AG04449 (cell line): ENCODE measurements at regions of chr3 and their contacts with region 1.

Region 1: DNA sequence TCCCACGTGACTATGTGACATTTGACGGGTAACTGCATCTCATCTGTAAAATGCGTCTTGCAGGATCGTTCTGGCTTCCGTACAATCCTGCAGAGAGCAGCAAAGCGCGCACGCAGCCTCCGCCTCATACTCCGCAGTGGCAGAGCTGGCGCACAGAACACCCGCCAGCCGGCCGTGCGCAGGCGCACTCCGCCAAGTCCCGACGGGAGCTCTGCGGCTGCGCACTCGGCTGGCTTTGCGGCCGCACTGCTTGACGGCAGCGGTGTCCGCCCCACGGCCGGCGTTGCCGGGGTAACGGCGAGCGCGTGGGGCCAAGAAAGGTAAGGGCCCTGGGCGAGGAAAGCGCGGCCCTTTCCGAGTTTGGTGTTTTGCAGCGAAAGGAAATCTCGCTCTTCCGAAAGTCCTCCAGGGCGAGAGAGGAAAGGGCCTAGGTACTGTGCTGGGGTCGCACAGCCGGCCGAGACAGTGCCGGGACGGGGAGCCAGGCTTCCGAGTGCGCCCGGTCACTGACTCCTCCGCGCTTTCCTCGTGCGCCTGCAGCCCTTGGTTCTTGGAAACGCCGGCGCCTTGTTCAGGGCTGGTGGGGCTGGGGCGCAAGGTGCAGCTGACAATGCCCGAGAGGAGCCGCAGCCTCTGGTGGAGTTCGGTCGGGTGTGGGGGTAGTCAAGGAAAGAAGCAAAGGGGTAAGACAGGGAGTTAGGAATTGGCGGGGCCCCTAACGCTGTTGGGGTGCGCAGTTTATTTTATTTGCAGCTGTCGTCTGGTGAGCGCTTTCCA is at the start of gene TSEN2:
- DNase-seq: no peak
- H3K4me3 ChIP-seq: peak within 1 kb of the TSS; percentile 90
- CTCF ChIP-seq: peak; percentile 39

Region 2: GRCh38 chr3:12135029-12135657 is 349.2 kb before region 1 on chr3:
- CTCF ChIA-PET with region 1: interaction called, 808 read pairs
- POLR2A ChIA-PET with region 1: interaction called, 3 read pairs
- DNase-seq: no peak
- H3K4me3 ChIP-seq: no peak overlapping the region
- CTCF ChIP-seq: peak; percentile 95

Region 3: DNA sequence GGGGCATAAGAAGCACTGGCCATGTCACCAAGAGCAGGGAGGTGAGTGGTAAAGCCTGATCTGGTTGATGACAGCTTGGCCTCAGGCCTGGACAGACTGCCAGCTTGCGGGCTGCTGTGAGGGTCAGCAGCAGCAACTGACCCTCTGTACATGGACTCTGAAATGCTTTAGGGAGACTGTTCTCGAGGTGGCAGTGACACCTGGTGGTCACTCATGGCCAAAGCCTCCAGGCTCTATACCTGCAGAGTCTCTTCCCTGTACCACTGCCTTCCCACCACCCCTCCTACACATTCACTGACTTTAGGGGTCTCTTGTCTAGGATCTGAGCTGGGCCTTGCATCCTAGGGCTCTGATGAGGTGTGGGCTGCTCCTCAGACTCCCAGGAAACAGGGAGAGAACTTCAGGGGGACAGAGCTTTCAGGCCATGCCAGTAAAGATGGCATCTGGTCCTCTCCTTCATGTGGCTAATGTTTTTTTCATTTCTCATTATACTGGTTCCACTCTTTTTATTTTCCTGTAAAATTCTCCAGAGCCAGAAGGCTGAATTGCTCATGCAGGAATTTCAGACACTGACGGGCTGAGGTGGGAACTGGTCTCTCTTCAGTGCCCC is 308.4 kb before region 1 on chr3:
- CTCF ChIA-PET with region 1: interaction called, 76 read pairs
- POLR2A ChIA-PET with region 1: no interaction called
- DNase-seq: no peak
- H3K4me3 ChIP-seq: no peak overlapping the region
- CTCF ChIP-seq: peak; percentile 84

Region 4: DNA sequence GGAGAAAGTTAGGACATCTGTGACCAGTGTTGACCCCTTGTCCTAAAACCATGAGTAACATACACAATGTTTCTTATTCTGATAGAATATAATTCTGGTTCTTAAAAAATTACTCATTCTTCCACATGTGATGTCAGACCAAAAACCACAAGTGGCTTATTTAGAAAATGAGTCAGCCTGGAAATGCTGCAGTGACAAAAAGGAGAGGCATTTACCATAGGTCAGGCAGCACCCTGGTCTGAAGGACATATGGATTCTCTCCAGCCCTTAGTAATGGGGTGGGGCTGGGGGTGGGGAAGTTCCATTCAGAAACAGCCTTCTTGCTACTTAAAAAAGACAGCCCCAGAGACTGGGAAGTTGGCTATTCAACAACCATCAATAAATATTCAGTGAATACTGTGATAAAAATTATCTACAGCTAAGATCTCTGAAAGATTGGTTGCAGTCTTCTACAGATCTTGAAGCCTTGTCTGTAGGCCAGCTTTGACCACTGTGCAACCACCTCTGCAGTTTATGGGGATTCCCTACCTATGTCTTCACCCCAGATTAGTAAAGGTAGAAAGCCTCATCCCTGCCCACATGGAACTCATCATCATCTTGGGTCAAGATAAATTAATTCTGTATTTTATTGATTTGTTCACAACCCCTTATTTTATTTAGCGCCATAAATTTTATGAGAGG is 290.8 kb before region 1 on chr3:
- CTCF ChIA-PET with region 1: interaction called, 14 read pairs
- POLR2A ChIA-PET with region 1: no interaction called
- DNase-seq: peak; percentile 97
- H3K4me3 ChIP-seq: no peak overlapping the region
- CTCF ChIP-seq: no peak

Region 5: DNA sequence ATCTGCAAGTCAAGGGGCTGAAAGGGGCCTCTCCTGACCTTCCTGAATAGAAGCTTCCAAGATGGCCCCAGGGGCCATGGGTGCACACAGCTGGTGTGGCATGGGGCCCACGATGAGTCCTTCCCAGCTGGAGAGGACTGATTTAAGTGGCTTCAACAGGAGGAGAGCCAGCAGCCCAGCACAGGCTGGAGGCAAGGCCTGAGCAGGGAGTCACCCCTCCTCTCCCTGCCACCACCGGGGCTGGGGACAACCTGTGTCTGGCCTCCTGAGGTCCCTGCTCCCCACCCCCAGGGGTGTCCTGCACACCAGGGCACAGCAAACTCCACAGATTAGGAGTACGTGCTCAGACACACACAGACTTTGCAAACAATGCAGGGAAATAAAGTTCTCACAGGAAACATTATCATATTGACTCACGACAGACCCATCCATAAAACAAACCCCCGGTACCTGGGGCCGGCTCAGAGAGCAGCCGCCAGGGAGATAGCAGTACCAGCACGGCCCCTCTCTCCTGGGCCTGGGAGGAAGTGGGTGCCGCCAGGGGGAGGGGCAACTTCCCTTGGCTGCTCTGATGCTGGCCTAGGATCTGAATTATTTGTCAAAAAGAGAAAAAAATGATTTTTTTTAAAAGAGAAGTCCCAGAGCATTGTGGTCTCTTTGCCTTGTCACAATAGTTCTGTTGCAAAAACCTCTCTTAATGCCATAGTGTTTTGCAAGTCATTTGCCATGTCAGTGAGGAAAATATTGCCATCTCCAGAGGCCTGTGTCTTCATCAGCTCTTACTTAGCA is 22.0 kb before region 1 on chr3:
- CTCF ChIA-PET with region 1: interaction called, 41 read pairs
- POLR2A ChIA-PET with region 1: no interaction called
- DNase-seq: no peak
- H3K4me3 ChIP-seq: no peak overlapping the region
- CTCF ChIP-seq: no peak

Region 6: DNA sequence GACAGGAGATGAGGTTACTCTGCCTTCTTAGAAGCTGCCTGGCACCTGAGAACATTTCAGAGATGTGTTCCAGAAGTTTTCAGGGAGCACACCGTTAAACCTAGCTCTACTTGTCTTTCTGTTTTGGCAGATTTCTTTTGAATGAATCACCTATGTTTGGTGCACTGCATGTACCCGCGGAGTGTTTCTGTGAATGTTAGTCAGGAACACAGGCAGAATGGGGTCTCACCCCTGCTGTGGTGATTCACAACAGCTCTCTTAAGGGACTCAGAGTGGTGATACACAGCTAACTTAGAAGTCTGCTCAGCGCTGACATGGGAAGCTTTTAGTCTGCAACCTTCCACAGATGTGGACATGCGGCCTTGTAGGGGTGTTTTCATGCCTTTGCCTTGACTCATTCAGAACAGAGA is 23.9 kb after region 1 on chr3:
- CTCF ChIA-PET with region 1: interaction called, 17 read pairs
- POLR2A ChIA-PET with region 1: no interaction called
- DNase-seq: peak; percentile 92
- H3K4me3 ChIP-seq: peak overlapping the region; percentile 29; the same call in 1 of the 2 replicates
- CTCF ChIP-seq: no peak

Region 7: DNA sequence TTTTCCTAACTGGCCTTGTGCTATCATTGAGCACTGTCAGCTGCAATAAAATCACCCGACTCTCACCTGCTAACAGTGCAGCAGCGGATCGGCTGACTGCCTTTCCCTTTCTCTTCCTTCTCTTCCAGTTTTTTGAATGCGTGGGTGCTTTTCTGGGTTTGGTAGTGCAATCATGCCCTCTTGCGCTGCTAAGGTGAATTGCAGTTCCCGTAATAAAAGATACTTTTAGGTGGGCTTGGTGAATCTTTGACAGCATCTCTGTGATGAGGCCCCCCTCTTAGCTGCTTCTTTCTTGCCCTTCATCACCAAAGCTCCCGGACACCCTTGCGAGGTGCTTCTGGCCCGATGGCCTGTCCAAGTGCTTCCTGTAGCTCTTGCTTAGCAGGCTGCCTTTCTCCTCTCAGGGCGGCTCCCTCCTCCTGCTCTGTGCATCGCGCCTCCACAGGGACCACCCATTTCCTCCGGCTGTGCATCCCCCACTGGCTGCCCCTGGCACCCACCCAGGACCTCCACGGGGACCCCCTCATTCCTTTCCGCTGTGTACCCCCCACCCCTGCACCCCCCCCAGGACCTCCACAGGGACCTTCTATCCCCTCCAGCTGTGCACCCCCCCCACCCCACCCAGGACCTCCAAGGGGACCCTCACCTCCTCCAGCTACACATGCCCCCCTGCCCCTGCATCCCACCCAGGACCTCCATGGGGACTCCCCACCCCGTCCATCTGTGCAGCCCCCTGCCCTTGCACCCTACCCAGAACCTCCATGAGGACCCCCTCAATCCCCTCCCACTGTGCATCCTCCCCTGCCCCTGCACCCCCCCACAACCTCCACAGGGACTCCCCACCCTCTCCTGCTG is 407.8 kb after region 1 on chr3:
- CTCF ChIA-PET with region 1: interaction called, 21 read pairs
- POLR2A ChIA-PET with region 1: no interaction called
- DNase-seq: no peak
- H3K4me3 ChIP-seq: peak overlapping the region; percentile 25
- CTCF ChIP-seq: peak; percentile 70